Tibial artery (tissue), 4 donors: ENCODE measurements at regions of chr3 and their contacts with region 1.

Region 1: DNA sequence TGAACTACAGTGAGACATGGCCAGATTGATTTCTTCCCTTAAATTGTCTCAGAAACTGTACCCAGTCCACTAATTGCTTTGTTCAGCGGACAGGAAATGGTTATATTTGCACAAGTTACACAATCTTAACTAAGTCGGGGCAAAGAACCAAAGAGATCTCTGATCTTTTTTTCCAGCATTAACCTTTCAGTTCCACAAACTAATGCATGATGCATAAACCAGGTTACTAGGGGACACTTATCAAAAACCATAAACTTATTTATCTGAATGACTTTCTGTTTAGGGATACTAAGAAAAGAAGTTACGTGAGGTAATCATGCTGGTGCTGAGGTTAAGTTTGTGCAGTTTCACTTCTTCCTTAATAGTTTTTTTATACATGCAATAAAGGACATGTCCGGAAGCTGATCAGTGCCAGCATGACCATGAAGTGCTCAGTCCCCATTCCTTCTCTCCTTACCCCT is 22.4 kb downstream of the FNDC3B start:
- DNase-seq: no peak
- H3K4me3 ChIP-seq: peak overlapping the region; percentile 15 to 30
- H3K27ac ChIP-seq: peak overlapping the region; percentile 32 to 55
- H3K4me1 ChIP-seq: peaks cover 0 to 99% (median 49%) of the 10 kb centered on the region in 4 donors
- H3K27me3 ChIP-seq: no peaks in the 10 kb centered on the region
- CTCF ChIP-seq: no peak

Region 2: GRCh38 chr3:171950373-171950772 is 111.4 kb before region 1 on chr3:
- intact Hi-C with region 1: no loop called
- DNase-seq: no peak
- H3K4me3 ChIP-seq: no peak overlapping the region
- H3K27ac ChIP-seq: no peak overlapping the region
- H3K4me1 ChIP-seq: no peaks in the 10 kb centered on the region
- H3K27me3 ChIP-seq: no peaks in the 10 kb centered on the region
- CTCF ChIP-seq: no peak

Region 3: GRCh38 chr3:172129870-172130683 is 68.3 kb after region 1 on chr3:
- intact Hi-C with region 1: loop called (anchors 10 kb)
- DNase-seq: peak; percentile 96 to 97
- H3K4me3 ChIP-seq: no peak overlapping the region
- H3K27ac ChIP-seq: peak overlapping the region; percentile 71
- H3K4me1 ChIP-seq: peaks cover 0 to 63% (median 30%) of the 10 kb centered on the region in 4 donors
- H3K27me3 ChIP-seq: no peaks in the 10 kb centered on the region
- CTCF ChIP-seq: no peak